BJ (cell line): ENCODE measurements at regions of chr11 and their contacts with region 1.

Region 1: GRCh38 chr11:73307323-73308002 is 613 bp upstream of the ARHGEF17 start:
- DNase-seq: peak; percentile 90
- H3K4me3 ChIP-seq: peak overlapping the region; percentile 80
- H3K27me3 ChIP-seq: no peaks in the 10 kb centered on the region
- CTCF ChIP-seq: peak; percentile 89

Region 2: GRCh38 chr11:72668611-72669347 is 638.7 kb before region 1 on chr11:
- CTCF ChIA-PET with region 1: no interaction called
- POLR2A ChIA-PET with region 1: interaction called, 13 read pairs
- DNase-seq: no peak
- H3K4me3 ChIP-seq: no peak overlapping the region
- H3K27me3 ChIP-seq: peaks cover 34% of the 10 kb centered on the region
- CTCF ChIP-seq: no peak

Region 3: DNA sequence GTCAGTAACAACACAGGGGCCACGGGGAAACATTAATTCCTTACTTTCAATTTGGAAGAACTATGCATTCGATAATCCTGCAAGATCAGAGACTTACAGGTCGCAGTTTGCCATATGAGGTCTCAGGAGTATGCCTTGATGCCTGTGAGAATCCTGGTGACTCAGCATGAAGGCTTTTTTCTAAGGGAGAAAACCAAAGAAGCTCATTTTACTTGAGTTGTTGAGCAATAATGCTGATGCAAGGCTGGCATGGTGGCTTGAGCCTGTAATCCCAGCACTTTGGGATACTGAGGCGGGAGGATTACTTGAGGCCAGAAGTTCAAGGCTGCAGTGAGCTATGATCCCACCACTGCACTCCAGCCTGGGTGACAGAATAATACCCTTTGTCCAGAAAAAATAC is 466.7 kb before region 1 on chr11:
- CTCF ChIA-PET with region 1: no interaction called
- POLR2A ChIA-PET with region 1: interaction called, 15 read pairs
- DNase-seq: peak; percentile 59
- H3K4me3 ChIP-seq: no peak overlapping the region
- H3K27me3 ChIP-seq: no peaks in the 10 kb centered on the region
- CTCF ChIP-seq: no peak

Region 4: DNA sequence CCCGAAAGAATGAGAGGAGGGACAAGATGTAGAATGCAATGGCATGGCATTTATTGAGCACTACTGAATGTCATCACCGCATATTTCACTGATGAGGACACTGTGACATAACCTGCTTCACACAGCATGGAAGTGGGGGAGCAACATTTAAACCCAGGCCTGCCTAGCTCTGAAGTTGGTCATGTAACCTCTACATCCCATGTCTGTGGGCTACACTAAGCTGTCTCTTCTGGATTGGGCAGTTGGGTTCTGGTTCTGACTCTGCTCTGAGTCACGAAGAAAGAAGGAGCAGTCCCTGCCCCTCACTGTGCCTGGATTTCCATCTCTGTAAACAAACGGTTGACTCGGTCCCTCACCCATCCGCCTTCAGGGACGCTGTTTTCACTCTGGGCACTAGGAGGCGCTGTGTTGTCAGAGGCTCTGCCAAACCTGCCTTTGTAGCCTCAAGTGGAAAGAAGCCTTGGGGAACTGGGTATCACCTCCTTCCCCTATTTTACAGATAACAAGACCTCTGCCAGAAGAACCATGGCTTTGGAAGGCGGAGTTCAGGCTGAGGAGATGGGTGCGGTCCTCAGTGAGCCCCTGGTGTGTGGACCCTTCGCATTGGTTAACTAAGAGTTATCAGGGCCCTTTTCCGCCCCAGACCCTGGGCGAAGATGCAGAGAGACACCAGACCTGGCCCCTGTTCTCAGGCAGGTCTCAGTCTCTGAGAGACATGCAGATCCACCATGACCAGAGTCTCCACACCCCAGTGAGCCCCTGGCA is 12.1 kb before region 1 on chr11:
- CTCF ChIA-PET with region 1: interaction called, 53 read pairs
- POLR2A ChIA-PET with region 1: no interaction called
- DNase-seq: peak; percentile 70
- H3K4me3 ChIP-seq: no peak overlapping the region
- H3K27me3 ChIP-seq: no peaks in the 10 kb centered on the region
- CTCF ChIP-seq: peak; percentile 98

Region 5: DNA sequence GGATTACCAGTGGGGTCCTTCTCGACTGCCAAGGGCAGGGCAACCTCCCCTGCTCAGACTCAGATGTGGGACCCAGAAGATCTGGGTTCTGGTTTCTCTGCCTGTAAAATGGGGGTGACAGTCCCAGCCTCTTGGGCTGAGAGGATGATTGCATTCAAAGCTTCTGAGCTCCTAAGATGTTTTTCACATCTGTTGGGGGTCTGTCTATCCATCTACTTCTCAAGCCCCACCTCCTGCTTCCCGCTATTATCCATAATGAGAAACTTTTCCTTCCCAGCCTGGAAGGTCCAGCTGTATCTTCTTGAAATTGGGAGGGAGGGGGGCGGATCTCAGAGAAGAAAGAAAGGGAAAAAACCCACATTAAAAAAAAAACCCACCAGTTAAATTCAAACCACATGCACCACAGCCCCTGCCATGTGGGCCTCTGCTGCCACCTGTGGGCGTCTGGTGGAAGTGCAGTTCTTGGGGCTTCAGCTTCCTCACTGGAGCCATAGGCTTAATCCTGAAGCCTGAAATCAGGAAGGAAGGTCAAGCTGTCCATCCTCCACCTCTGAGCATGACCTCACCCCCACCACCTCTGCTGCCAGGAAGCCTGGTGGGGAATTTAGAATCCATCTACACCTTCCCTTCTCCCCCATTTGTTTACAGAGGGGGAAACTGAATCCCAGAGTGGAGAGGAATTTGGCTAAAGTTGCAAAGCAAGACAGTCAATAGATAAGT is 27.9 kb after region 1 on chr11:
- CTCF ChIA-PET with region 1: interaction called, 259 read pairs
- POLR2A ChIA-PET with region 1: interaction called, 19 read pairs
- DNase-seq: no peak
- H3K4me3 ChIP-seq: no peak overlapping the region
- H3K27me3 ChIP-seq: no peaks in the 10 kb centered on the region
- CTCF ChIP-seq: peak; percentile 98

Region 6: DNA sequence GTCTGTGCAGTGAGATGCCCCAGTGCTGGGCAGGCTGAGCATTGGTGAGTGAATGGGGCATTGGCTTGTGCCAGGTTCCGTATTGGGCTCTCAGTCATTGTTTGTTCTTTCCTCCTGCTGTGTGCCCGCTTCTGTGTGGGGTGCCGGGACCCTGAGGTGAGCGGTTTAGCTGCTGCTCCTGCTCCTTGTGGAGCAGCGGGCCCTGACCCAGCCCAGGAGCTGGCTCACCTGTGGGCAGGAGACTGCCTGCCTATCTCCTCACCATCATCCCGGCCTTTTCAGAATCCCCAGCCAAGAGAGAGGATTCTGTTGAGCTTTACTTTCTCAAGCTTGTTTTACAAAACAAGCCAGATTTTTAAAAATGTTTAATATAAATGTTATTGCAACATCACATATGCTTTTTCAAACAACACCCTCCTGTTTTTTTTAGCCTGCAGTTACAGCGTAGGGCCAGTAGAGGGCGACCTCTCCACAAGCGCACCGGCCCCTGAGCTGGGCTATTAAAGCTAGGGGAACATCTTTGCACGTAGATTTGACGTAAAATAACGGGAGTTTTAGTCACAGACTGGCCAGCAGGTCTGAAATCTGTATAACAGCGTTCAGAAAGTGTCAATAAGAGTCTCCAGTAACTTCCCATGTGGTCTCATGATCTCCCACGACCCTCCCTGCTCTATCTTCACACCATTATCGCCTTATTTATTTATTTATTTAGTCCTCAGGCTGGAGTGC is 43.6 kb after region 1 on chr11:
- CTCF ChIA-PET with region 1: interaction called, 91 read pairs
- POLR2A ChIA-PET with region 1: no interaction called
- DNase-seq: no peak
- H3K4me3 ChIP-seq: no peak overlapping the region
- H3K27me3 ChIP-seq: no peaks in the 10 kb centered on the region
- CTCF ChIP-seq: peak; percentile 100

Region 7: DNA sequence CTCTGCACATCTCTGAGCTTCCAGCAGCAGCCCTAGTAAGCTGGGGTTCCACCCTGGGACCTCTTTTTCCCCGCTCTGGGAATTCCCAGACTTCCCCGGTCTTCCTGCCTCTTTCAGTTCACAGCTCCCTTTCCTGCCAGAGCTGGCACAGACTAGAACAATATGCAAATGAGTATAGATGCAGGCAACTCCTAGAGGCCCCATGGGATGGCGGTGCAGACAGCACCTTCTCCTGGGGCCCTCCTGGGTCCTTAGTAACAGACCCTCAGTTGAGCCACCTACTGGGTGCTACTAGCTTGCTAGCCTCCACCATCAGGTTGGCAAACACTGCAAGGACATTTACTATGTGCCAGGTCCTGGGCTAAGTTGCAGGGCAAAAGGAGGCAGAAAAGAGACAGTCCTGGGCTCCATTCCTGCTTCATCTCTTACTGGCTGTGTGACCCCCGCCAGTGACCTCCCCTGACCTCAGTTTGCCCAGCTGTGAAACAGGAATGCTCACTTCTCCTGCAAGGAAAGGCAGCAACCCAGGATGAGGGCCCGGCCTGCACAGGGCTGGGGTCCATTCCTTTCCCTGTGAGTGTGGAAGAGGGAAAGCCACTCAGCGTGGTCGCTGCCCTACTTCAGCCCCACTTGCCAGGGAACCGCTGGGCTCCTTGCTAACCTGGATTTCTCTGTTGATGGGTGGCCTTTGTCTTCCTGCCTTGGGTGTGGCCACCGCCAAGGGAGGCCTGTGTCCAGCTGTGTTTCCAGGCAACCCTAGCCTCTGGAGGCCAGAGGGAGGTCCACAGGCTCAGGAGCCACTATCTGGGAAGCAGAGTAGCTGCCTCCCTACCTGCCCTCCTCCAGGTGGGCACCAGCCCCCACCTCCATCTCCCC is 76.0 kb after region 1 on chr11:
- CTCF ChIA-PET with region 1: interaction called, 8 read pairs
- POLR2A ChIA-PET with region 1: interaction called, 13 read pairs
- DNase-seq: no peak
- H3K4me3 ChIP-seq: no peak overlapping the region
- H3K27me3 ChIP-seq: no peaks in the 10 kb centered on the region
- CTCF ChIP-seq: no peak